Natural killer cell (primary cell): ENCODE measurements at regions of chr11 and their contacts with region 1.

Region 1: GRCh38 chr11:63866211-63866610 is 27.3 kb downstream of the MARK2 start:
- DNase-seq: peak; percentile 60 to 90
- ATAC-seq: peak; percentile 86 to 93 (median 90)
- H3K4me3 ChIP-seq: no peak overlapping the region
- H3K4me3 Mint-ChIP-seq: peak overlapping the region; percentile 81
- H3K27ac ChIP-seq: peak overlapping the region; percentile 79
- H3K27ac Mint-ChIP-seq: peak overlapping the region; percentile 81 to 87
- H3K4me1 ChIP-seq: peaks cover 79% of the 10 kb centered on the region
- H3K4me1 Mint-ChIP-seq: peaks cover 75 to 78% of the 10 kb centered on the region in 2 donors
- H3K27me3 ChIP-seq: no peaks in the 10 kb centered on the region
- H3K27me3 Mint-ChIP-seq: no peaks in the 10 kb centered on the region
- CTCF ChIP-seq: no peak

Region 2: GRCh38 chr11:63671322-63672155 is 194.7 kb before region 1 on chr11 and contains the start of gene ATL3:
- intact Hi-C with region 1: no loop called
- DNase-seq: peak; percentile 89 to 96
- ATAC-seq: peak; percentile 94 to 96 (median 95)
- H3K4me3 ChIP-seq: peak within 1 kb of the TSS; percentile 75
- H3K4me3 Mint-ChIP-seq: peak within 1 kb of the TSS; percentile 91
- H3K27ac ChIP-seq: peak within 1 kb of the TSS; percentile 61
- H3K27ac Mint-ChIP-seq: peak within 1 kb of the TSS; percentile 79 to 81
- H3K4me1 ChIP-seq: peaks cover 9% of the 10 kb centered on the region
- H3K4me1 Mint-ChIP-seq: peaks cover 14 to 24% of the 10 kb centered on the region in 2 donors
- H3K27me3 ChIP-seq: no peaks in the 10 kb centered on the region
- H3K27me3 Mint-ChIP-seq: no peaks in the 10 kb centered on the region
- CTCF ChIP-seq: no peak
- total RNA-seq, gene ATL3: 35.7 to 46.8 (median 41.6) TPM

Region 3: GRCh38 chr11:63853476-63853875 is 12.7 kb before region 1 on chr11:
- intact Hi-C with region 1: loop called (anchors 2 kb)
- DNase-seq: no peak
- ATAC-seq: peak in 1 of 3 donors; percentile 15
- H3K4me3 ChIP-seq: no peak overlapping the region
- H3K4me3 Mint-ChIP-seq: peak overlapping the region; percentile 9
- H3K27ac ChIP-seq: no peak overlapping the region
- H3K27ac Mint-ChIP-seq: peak overlapping the region; percentile 90 to 91
- H3K4me1 ChIP-seq: peaks cover 52% of the 10 kb centered on the region
- H3K4me1 Mint-ChIP-seq: peaks cover 59 to 63% of the 10 kb centered on the region in 2 donors
- H3K27me3 ChIP-seq: no peaks in the 10 kb centered on the region
- H3K27me3 Mint-ChIP-seq: no peaks in the 10 kb centered on the region
- CTCF ChIP-seq: no peak